ENCODE measurements at regions of chr6 and their contacts with region 1.

Region 1: GRCh38 chr6:36123257-36124139 is 6.8 kb upstream of the MAPK13 start:
- DNase-seq: peak; percentile 90 to 95 (median 91)
- H3K4me3 ChIP-seq: no peak overlapping the region
- H3K4me3 Mint-ChIP-seq: peak overlapping the region; percentile 4 to 76 (median 44)
- H3K27ac ChIP-seq: peak overlapping the region; percentile 90
- H3K27ac Mint-ChIP-seq: peak overlapping the region; percentile 91 to 99 (median 96)
- H3K4me1 ChIP-seq: peaks cover 90% of the 10 kb centered on the region
- H3K4me1 Mint-ChIP-seq: peaks cover 66 to 89% (median 78%) of the 10 kb centered on the region in 4 donors
- H3K27me3 ChIP-seq: no peaks in the 10 kb centered on the region
- H3K27me3 Mint-ChIP-seq: no peaks in the 10 kb centered on the region

Region 2: DNA sequence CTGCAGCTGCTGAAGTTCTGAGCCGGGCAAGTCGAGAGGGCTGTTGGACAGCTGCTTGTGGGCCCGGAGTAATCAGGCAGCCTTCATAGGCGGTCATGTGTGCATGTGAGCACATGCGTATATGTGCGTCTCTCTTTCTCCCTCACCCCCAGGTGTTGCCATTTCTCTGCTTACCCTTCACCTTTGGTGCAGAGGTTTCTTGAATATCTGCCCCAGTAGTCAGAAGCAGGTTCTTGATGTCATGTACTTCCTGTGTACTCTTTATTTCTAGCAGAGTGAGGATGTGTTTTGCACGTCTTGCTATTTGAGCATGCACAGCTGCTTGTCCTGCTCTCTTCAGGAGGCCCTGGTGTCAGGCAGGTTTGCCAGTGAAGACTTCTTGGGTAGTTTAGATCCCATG is 14.4 kb before region 1 on chr6:
- CTCF ChIA-PET with region 1: interaction called, 70 read pairs
- POLR2A ChIA-PET with region 1: interaction called, 27 read pairs
- intact Hi-C with region 1: loop called (anchors 1 kb)
- DNase-seq: peak; percentile 59 to 72 (median 61)
- H3K4me3 ChIP-seq: no peak overlapping the region
- H3K4me3 Mint-ChIP-seq: peak overlapping the region in 7 of 8 donors; percentile 7 to 57 (median 51)
- H3K27ac ChIP-seq: peak overlapping the region; percentile 22
- H3K27ac Mint-ChIP-seq: peak overlapping the region; percentile 80 to 95 (median 91)
- H3K4me1 ChIP-seq: peaks cover 40% of the 10 kb centered on the region
- H3K4me1 Mint-ChIP-seq: peaks cover 26 to 48% (median 36%) of the 10 kb centered on the region in 4 donors
- H3K27me3 ChIP-seq: no peaks in the 10 kb centered on the region
- H3K27me3 Mint-ChIP-seq: no peaks in the 10 kb centered on the region

Region 3: GRCh38 chr6:36196880-36197548 is 73.5 kb after region 1 on chr6:
- CTCF ChIA-PET with region 1: interaction called, 10 read pairs
- POLR2A ChIA-PET with region 1: interaction called, 22 read pairs
- intact Hi-C with region 1: loop called (anchors 1 kb)
- DNase-seq: peak; percentile 96 to 99 (median 97)
- H3K4me3 ChIP-seq: peak overlapping the region; percentile 71 to 76
- H3K4me3 Mint-ChIP-seq: peak overlapping the region; percentile 89 to 94 (median 92)
- H3K27ac ChIP-seq: peak overlapping the region; percentile 73
- H3K27ac Mint-ChIP-seq: peak overlapping the region; percentile 83 to 96 (median 92)
- H3K4me1 ChIP-seq: peaks cover 42% of the 10 kb centered on the region
- H3K4me1 Mint-ChIP-seq: peaks cover 26 to 56% (median 41%) of the 10 kb centered on the region in 4 donors
- H3K27me3 ChIP-seq: no peaks in the 10 kb centered on the region
- H3K27me3 Mint-ChIP-seq: no peaks in the 10 kb centered on the region

Region 4: GRCh38 chr6:36204068-36204753 is 80.7 kb after region 1 on chr6:
- CTCF ChIA-PET with region 1: interaction called, 6 read pairs
- POLR2A ChIA-PET with region 1: interaction called, 11 read pairs
- intact Hi-C with region 1: no loop called
- DNase-seq: peak; percentile 71 to 81 (median 77)
- H3K4me3 ChIP-seq: peak overlapping the region in 1 of 2 donors; percentile 11
- H3K4me3 Mint-ChIP-seq: peak overlapping the region; percentile 48 to 86 (median 76)
- H3K27ac ChIP-seq: no peak overlapping the region
- H3K27ac Mint-ChIP-seq: peak overlapping the region; percentile 41 to 93 (median 75)
- H3K4me1 ChIP-seq: peaks cover 53% of the 10 kb centered on the region
- H3K4me1 Mint-ChIP-seq: peaks cover 50 to 73% (median 61%) of the 10 kb centered on the region in 4 donors
- H3K27me3 ChIP-seq: no peaks in the 10 kb centered on the region
- H3K27me3 Mint-ChIP-seq: no peaks in the 10 kb centered on the region

Region 5: GRCh38 chr6:36302227-36302976 is 178.9 kb after region 1 on chr6:
- CTCF ChIA-PET with region 1: interaction called, 8 read pairs
- POLR2A ChIA-PET with region 1: no interaction called
- intact Hi-C with region 1: loop called (anchors 5 kb)
- DNase-seq: peak; percentile 86 to 91 (median 87)
- H3K4me3 ChIP-seq: no peak overlapping the region
- H3K4me3 Mint-ChIP-seq: no peak overlapping the region
- H3K27ac ChIP-seq: no peak overlapping the region
- H3K27ac Mint-ChIP-seq: peak overlapping the region in 2 of 7 donors; percentile 30 to 32
- H3K4me1 ChIP-seq: no peaks in the 10 kb centered on the region
- H3K4me1 Mint-ChIP-seq: peaks cover 0 to 9% (median 2%) of the 10 kb centered on the region in 4 donors
- H3K27me3 ChIP-seq: no peaks in the 10 kb centered on the region
- H3K27me3 Mint-ChIP-seq: peaks cover 10 to 22% of the 10 kb centered on the region in 2 donors

Region 6: GRCh38 chr6:36360241-36361054 is 236.9 kb after region 1 on chr6:
- CTCF ChIA-PET with region 1: interaction called, 5 read pairs
- POLR2A ChIA-PET with region 1: no interaction called
- intact Hi-C with region 1: loop called (anchors 1 kb)
- DNase-seq: peak; percentile 63 to 73 (median 69)
- H3K4me3 ChIP-seq: no peak overlapping the region
- H3K4me3 Mint-ChIP-seq: peak overlapping the region in 1 of 8 donors; percentile 36
- H3K27ac ChIP-seq: no peak overlapping the region
- H3K27ac Mint-ChIP-seq: no peak overlapping the region
- H3K4me1 ChIP-seq: peaks cover 7% of the 10 kb centered on the region
- H3K4me1 Mint-ChIP-seq: peaks cover 2 to 9% (median 5%) of the 10 kb centered on the region in 4 donors
- H3K27me3 ChIP-seq: no peaks in the 10 kb centered on the region
- H3K27me3 Mint-ChIP-seq: peaks cover 0 to 3% of the 10 kb centered on the region in 2 donors